HCT116 (cell line): ENCODE measurements at regions of chr1 and their contacts with region 1.

Region 1: GRCh38 chr1:22431965-22432364 is 19.7 kb upstream of the ZBTB40 start:
- DNase-seq: no peak
- ATAC-seq: no peak
- H3K4me3 ChIP-seq: no peak overlapping the region
- H3K27ac ChIP-seq: no peak overlapping the region
- H3K4me1 ChIP-seq: peaks cover 0 to 3% of the 10 kb centered on the region in 2 experiments; a peak in 1 of 4 replicates
- H3K27me3 ChIP-seq: no peaks in the 10 kb centered on the region
- CTCF ChIP-seq: no peak
- POLR2A ChIP-seq: no peak
- RAD21 ChIP-seq: no peak

Region 2: GRCh38 chr1:22416555-22417454 is 15.2 kb before region 1 on chr1:
- CTCF ChIA-PET with region 1: no interaction called
- POLR2A ChIA-PET with region 1: no interaction called
- RAD21 ChIA-PET with region 1: no interaction called
- intact Hi-C with region 1: no loop called
- DNase-seq: peak; percentile 61
- ATAC-seq: peak; percentile 78
- H3K4me3 ChIP-seq: no peak overlapping the region
- H3K27ac ChIP-seq: no peak overlapping the region
- H3K4me1 ChIP-seq: peaks cover 16 to 38% of the 10 kb centered on the region in 2 experiments
- H3K27me3 ChIP-seq: no peaks in the 10 kb centered on the region
- CTCF ChIP-seq: peak; percentile 88 to 97 (median 96)
- POLR2A ChIP-seq: no peak
- RAD21 ChIP-seq: peak; percentile 98

Region 3: GRCh38 chr1:22451702-22452474 is 19.9 kb after region 1 on chr1 and contains the start of gene ZBTB40:
- CTCF ChIA-PET with region 1: no interaction called
- POLR2A ChIA-PET with region 1: no interaction called
- RAD21 ChIA-PET with region 1: no interaction called
- intact Hi-C with region 1: loop called (anchors 1 kb)
- DNase-seq: peak; percentile 88
- ATAC-seq: peak; percentile 95
- H3K4me3 ChIP-seq: peak within 1 kb of the TSS; percentile 79 to 85
- H3K27ac ChIP-seq: peak within 1 kb of the TSS; percentile 67
- H3K4me1 ChIP-seq: peaks cover 13 to 25% of the 10 kb centered on the region in 2 experiments
- H3K27me3 ChIP-seq: no peaks in the 10 kb centered on the region
- CTCF ChIP-seq: no peak
- POLR2A ChIP-seq: peak; percentile 39
- RAD21 ChIP-seq: no peak
- total RNA-seq, gene ZBTB40: 19.5 TPM